CD4-positive, alpha-beta memory T cell (primary cell): ENCODE measurements at regions of chr11 and their contacts with region 1.

Region 1: DNA sequence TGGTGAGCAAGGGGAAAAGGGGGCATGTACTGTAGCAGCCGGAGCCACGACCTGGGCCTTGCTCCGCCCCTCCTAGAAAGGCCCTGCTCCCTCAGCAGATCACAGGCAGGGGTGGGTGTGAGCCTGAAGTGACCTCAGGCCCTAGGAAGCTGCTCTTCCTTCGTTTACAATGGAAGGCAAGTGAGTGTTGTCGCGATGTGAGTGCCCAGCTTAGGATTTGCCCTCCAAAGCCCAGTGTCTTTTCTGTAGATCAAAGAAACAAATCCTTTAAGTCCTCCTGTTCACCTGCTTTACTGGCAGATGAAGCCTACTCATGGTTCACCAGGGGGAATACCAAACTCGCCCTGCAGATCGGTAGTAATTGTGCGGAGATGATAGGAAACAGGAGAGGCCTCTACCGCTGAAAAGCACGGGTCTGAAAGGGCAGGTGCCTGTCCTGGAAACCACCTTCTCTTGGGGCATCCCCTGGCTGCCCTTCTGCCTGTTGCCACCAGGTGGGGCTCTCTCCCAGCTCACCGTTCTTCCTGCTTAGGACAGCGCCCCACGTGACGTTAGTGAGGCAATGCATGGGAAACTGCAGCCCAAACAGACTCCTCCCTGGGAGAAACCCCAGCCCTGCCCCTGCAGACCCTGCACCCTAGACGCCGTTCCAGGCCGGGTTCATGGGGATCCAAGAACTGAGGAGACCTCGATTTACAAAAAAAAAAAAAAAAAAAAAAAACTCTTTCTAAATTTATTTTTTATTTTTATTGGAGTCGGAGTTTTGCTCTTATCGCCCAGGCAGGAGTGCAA is 45.9 kb upstream of the RAB1B start:
- DNase-seq: peak; percentile 92 to 97 (median 94)
- H3K4me3 ChIP-seq: no peak overlapping the region
- H3K4me3 Mint-ChIP-seq: peak overlapping the region in 3 of 8 donors; percentile 4 to 30 (median 27)
- H3K27ac ChIP-seq: peak overlapping the region; percentile 89
- H3K27ac Mint-ChIP-seq: peak overlapping the region; percentile 92 to 99 (median 98)
- H3K4me1 ChIP-seq: peaks cover 11% of the 10 kb centered on the region
- H3K4me1 Mint-ChIP-seq: peaks cover 11 to 22% (median 13%) of the 10 kb centered on the region in 4 donors
- H3K27me3 ChIP-seq: no peaks in the 10 kb centered on the region
- H3K27me3 Mint-ChIP-seq: no peaks in the 10 kb centered on the region

Region 2: GRCh38 chr11:66237867-66238266 is 15.3 kb after region 1 on chr11:
- CTCF ChIA-PET with region 1: interaction called, 11 read pairs
- POLR2A ChIA-PET with region 1: interaction called, 3 read pairs
- intact Hi-C with region 1: no loop called
- DNase-seq: no peak
- H3K4me3 ChIP-seq: no peak overlapping the region
- H3K4me3 Mint-ChIP-seq: no peak overlapping the region
- H3K27ac ChIP-seq: no peak overlapping the region
- H3K27ac Mint-ChIP-seq: peak overlapping the region in 1 of 7 donors; percentile 24
- H3K4me1 ChIP-seq: no peaks in the 10 kb centered on the region
- H3K4me1 Mint-ChIP-seq: peaks cover 0 to 2% (median 0%) of the 10 kb centered on the region in 4 donors
- H3K27me3 ChIP-seq: no peaks in the 10 kb centered on the region
- H3K27me3 Mint-ChIP-seq: no peaks in the 10 kb centered on the region

Region 3: GRCh38 chr11:66268283-66268951 is 45.9 kb after region 1 on chr11 and contains the start of gene RAB1B:
- CTCF ChIA-PET with region 1: interaction called, 5 read pairs
- POLR2A ChIA-PET with region 1: interaction called, 3 read pairs
- intact Hi-C with region 1: loop called (anchors 2 kb)
- DNase-seq: peak; percentile 99 to 100 (median 100)
- H3K4me3 ChIP-seq: peak within 1 kb of the TSS; percentile 62 to 84
- H3K4me3 Mint-ChIP-seq: peak within 1 kb of the TSS; percentile 92 to 99 (median 94)
- H3K27ac ChIP-seq: peak within 1 kb of the TSS; percentile 88
- H3K27ac Mint-ChIP-seq: peak within 1 kb of the TSS; percentile 94 to 100 (median 98)
- H3K4me1 ChIP-seq: peaks cover 48% of the 10 kb centered on the region
- H3K4me1 Mint-ChIP-seq: peaks cover 23 to 57% (median 39%) of the 10 kb centered on the region in 4 donors
- H3K27me3 ChIP-seq: no peaks in the 10 kb centered on the region
- H3K27me3 Mint-ChIP-seq: no peaks in the 10 kb centered on the region
- total RNA-seq, gene RAB1B: 76.4 to 79.4 TPM

Region 4: DNA sequence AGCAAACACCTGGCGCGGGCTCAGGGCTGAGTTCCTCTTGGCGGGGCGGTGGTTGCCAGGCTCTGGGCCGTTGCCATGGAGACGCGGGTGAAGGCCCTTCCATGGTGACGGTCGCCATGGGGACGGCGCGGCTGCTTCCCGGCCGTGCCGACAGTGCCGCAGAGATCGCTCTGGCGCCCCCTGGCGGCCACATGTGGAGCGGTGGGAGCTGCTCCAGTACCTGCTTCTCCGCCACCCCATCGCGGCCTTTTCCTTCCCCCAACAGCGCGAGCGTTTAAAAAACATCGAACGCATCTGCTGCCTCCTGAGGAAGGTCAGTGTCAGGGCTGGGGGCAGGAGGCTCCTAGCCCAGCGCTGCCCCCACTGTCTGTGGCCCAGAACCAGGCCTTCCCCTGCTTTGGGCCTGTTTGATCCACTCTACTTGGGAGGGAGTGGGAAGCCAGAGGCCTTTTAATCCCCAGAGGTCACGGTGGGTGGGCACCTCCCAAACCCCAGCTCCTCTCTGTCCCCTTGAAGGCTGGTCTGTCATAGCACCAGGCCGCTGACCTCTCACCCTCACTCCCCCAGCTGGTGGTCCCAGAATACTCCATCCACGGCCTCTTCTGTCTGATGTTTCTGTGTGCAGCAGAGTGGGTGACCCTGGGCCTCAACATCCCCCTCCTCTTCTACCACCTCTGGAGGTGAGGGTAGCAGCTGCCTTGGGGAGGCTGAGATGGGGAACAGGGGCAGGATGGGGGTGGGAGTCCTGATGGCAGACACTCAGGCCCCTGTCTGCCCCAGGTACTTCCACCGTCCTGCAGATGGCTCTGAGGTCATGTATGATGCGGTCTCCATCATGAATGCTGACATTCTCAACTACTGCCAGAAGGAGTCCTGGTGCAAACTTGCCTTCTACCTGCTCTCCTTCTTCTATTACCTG is 60.2 kb after region 1 on chr11:
- CTCF ChIA-PET with region 1: interaction called, 42 read pairs
- POLR2A ChIA-PET with region 1: interaction called, 9 read pairs
- intact Hi-C with region 1: loop called (anchors 1 kb)
- DNase-seq: peak; percentile 98 to 99 (median 99)
- H3K4me3 ChIP-seq: no peak overlapping the region
- H3K4me3 Mint-ChIP-seq: peak overlapping the region; percentile 11 to 81 (median 55)
- H3K27ac ChIP-seq: peak overlapping the region; percentile 62
- H3K27ac Mint-ChIP-seq: peak overlapping the region; percentile 86 to 96 (median 92)
- H3K4me1 ChIP-seq: peaks cover 30% of the 10 kb centered on the region
- H3K4me1 Mint-ChIP-seq: peaks cover 10 to 46% (median 29%) of the 10 kb centered on the region in 4 donors
- H3K27me3 ChIP-seq: no peaks in the 10 kb centered on the region
- H3K27me3 Mint-ChIP-seq: peaks cover 0 to 1% of the 10 kb centered on the region in 2 donors

Region 5: DNA sequence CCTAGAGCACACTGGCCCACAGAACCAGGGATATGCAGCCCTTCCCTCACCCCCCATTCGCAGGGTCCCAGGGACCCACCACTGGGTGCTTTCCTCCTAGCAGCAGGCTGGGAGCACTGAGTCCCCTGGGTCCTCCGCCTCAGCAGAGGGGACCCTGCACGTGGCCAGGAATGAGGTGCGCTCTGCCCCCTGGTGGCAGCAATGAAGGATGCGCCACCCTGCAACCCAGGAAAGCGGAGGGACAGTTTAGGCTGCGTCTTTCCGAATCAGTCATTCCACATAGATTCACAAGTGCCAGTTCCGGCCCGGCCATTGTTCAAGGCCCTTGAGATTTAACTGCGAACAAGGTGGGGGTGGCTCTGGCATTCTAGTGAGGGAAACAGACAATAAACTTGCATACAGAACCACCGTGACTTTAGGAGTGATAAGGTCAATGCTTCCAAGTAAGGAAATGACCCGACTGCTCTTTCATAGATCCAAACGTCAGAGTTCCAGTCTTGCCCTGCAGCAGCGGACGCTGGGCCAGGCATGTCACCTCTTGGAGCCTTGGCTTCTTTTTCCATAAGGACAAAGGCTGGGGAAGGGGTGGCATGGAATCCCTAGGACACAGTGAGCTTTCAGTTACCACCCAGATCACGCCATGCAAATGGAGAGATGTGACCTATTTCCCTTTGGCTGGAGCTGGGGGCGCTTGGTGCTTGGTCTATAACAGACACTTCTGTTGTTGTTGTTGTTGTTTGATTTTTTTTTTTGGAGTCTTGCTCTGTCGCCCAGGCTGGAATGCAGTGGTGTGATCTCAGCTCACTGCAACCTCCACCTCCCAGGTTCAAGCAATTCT is 106.0 kb after region 1 on chr11:
- CTCF ChIA-PET with region 1: interaction called, 3 read pairs
- POLR2A ChIA-PET with region 1: no interaction called
- intact Hi-C with region 1: loop called (anchors 1 kb)
- DNase-seq: peak; percentile 70 to 82 (median 77)
- H3K4me3 ChIP-seq: no peak overlapping the region
- H3K4me3 Mint-ChIP-seq: peak overlapping the region in 7 of 8 donors; percentile 16 to 77 (median 35)
- H3K27ac ChIP-seq: no peak overlapping the region
- H3K27ac Mint-ChIP-seq: peak overlapping the region in 6 of 7 donors; percentile 57 to 91 (median 66)
- H3K4me1 ChIP-seq: peaks cover 29% of the 10 kb centered on the region
- H3K4me1 Mint-ChIP-seq: peaks cover 18 to 27% (median 21%) of the 10 kb centered on the region in 4 donors
- H3K27me3 ChIP-seq: no peaks in the 10 kb centered on the region
- H3K27me3 Mint-ChIP-seq: no peaks in the 10 kb centered on the region